Activated T-helper 2 cell treated with anti-CD3 and anti-CD28 coated beads, Interferon-gamma antibody, Interleukin-2, Interleukin-4, amounts not matched to agents 10 μg/mL and 5 μg/mL and 100 μg/mL, durations not matched to agents 14 hours and 24 hours and 36 hours (primary cell): ENCODE measurements at regions of chr5 and their contacts with region 1.

Region 1: DNA sequence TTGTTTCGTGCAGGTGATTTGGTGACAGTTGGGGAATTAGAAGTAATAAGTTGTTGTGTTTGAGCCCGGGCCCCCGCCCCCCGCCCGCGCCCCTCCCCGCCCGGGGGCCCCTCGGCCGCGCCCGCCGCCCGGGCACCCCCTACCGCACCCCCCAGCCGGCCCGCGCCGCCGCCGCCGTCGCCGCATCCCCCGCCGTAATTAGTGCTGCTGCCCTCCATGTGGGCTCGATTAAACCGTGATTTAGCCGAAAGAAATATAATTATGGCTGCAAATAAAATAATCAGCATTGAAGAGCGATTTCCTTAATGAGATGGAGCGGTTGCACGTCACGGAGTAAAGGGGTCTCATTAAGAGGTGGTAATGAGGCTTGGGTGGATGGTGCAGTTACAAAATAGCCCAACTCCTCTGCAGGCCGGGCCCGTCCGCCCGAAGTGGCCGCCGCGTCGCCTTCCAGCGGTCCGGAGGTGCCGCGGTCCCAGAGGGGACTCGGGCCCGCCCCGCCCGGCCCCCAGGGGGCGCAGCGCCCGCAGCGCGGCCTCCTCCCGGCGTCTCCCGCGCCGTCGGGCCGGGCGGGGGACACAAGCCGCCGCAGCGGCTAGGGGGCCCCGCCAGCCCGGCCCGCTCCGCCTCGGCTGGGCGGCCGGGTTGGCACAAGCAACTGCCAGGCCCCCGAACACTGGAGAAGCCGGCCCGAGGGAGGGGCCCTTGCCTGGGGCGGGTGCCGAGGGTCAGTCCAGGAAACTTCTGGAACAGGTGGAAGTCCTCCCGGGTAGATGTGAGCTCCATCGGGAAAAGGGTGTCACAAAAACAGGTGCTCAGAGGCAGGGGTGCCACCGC is 6.9 kb upstream of the OTP start:
- DNase-seq: no peak
- H3K4me3 Mint-ChIP-seq: peak overlapping the region; percentile 53
- H3K27ac Mint-ChIP-seq: no peak overlapping the region
- H3K4me1 Mint-ChIP-seq: peaks cover 14% of the 10 kb centered on the region
- H3K27me3 Mint-ChIP-seq: peaks cover 84% of the 10 kb centered on the region

Region 2: GRCh38 chr5:76082772-76083554 is 1562.4 kb before region 1 on chr5 and contains the start of gene SV2C:
- intact Hi-C with region 1: loop called (anchors 5 kb)
- DNase-seq: peak; percentile 23
- H3K4me3 Mint-ChIP-seq: peak within 1 kb of the TSS; percentile 76
- H3K27ac Mint-ChIP-seq: peak within 1 kb of the TSS; percentile 37
- H3K4me1 Mint-ChIP-seq: peaks cover 17% of the 10 kb centered on the region
- H3K27me3 Mint-ChIP-seq: peaks cover 79% of the 10 kb centered on the region
- total RNA-seq, gene SV2C: 0.05 and 0.32 TPM in 2 replicates

Region 3: DNA sequence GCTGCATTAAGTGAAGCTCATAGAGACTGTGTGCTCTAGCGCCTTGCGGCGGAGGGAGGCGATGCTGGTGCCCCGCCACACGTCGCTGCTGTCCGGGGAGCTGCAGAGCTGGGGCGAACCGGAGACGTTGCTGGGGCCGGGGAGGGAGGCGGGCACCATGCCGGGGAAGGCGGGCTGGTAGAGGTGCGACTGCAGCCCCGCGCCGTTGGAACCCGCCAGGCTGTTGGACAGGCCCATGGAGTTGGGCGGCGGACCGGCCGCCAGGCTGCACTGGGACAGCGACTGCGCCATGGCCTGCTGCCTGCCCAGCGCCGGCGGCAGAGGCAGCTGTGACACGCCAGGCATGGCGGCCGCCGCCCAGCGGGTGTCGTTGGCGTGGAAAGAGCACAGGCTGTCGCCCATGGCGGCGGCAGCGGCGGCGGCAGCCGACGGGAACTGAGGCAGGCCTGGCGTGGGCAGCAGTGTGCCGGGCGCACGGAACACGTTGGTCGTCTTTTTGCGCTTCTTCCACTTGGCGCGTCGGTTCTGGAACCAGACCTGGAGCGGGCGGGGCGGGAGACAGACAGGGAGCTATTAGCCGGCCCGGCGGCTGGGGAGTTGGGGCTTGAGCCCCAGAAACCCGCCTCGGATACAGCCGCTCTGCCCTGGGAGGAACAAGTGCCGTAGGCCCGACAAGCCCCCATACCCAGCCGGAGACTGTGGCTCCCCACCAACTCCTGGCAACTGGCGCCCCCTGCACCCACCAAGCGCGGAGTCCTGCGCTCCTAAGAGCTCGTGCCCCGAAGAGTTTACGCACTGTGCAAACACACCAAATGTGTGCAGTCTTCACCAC is 14.9 kb before region 1 on chr5:
- intact Hi-C with region 1: loop called (anchors 1 kb)
- DNase-seq: peak; percentile 49
- H3K4me3 Mint-ChIP-seq: peak overlapping the region; percentile 75
- H3K27ac Mint-ChIP-seq: no peak overlapping the region
- H3K4me1 Mint-ChIP-seq: peaks cover 12% of the 10 kb centered on the region
- H3K27me3 Mint-ChIP-seq: peaks cover 72% of the 10 kb centered on the region

Region 4: DNA sequence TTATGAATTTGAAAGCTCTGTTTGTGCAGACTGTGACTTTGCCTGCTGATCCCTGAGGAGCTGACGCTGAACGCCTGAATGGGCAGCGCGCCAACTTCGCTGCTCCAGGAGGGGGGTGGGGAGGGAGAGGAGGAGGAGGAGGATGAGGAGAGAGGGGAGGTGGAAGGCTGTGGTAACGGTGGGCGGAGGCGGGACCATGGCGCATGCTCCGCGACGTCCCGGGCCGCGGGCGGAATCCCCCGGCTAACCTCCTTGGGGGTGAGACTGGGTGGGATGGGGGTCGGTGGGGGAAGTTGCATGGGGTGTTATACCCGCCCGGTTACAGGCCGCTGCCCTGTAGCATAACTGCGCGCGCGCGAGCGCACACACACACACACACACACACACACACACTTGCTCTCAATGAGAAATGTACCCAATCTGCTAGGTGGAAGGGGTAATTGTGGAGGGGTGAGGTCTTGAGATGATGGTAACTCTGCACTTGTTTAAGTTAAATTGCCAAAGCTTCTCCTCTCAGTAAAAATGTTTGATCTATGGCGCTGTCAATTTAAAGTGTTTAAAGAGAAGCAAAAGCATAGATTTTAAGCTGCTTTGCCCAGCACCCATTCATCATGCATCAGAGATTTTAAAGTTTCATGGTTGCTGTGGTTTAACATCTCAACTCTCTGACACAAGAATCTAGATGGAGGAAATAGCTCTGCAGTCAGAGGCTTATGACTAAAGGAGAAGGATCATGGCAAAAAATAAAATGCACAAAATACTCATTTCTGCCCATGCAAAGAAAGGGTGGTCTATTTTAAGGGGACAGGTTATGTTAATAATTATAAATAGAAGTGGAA is 207.4 kb after region 1 on chr5:
- intact Hi-C with region 1: loop called (anchors 2 kb)
- DNase-seq: peak; percentile 35
- H3K4me3 Mint-ChIP-seq: peak overlapping the region; percentile 72
- H3K27ac Mint-ChIP-seq: peak overlapping the region; percentile 77
- H3K4me1 Mint-ChIP-seq: peaks cover 14% of the 10 kb centered on the region
- H3K27me3 Mint-ChIP-seq: peaks cover 23% of the 10 kb centered on the region

Region 5: GRCh38 chr5:77972469-77973252 is 327.3 kb after region 1 on chr5:
- intact Hi-C with region 1: loop called (anchors 5 kb)
- DNase-seq: no peak
- H3K4me3 Mint-ChIP-seq: peak overlapping the region; percentile 56
- H3K27ac Mint-ChIP-seq: no peak overlapping the region
- H3K4me1 Mint-ChIP-seq: peaks cover 10% of the 10 kb centered on the region
- H3K27me3 Mint-ChIP-seq: peaks cover 75% of the 10 kb centered on the region

Region 6: GRCh38 chr5:78008356-78008967 is 363.1 kb after region 1 on chr5:
- intact Hi-C with region 1: loop called (anchors 1 kb)
- DNase-seq: no peak
- H3K4me3 Mint-ChIP-seq: no peak overlapping the region
- H3K27ac Mint-ChIP-seq: no peak overlapping the region
- H3K4me1 Mint-ChIP-seq: no peaks in the 10 kb centered on the region
- H3K27me3 Mint-ChIP-seq: no peaks in the 10 kb centered on the region

Region 7: DNA sequence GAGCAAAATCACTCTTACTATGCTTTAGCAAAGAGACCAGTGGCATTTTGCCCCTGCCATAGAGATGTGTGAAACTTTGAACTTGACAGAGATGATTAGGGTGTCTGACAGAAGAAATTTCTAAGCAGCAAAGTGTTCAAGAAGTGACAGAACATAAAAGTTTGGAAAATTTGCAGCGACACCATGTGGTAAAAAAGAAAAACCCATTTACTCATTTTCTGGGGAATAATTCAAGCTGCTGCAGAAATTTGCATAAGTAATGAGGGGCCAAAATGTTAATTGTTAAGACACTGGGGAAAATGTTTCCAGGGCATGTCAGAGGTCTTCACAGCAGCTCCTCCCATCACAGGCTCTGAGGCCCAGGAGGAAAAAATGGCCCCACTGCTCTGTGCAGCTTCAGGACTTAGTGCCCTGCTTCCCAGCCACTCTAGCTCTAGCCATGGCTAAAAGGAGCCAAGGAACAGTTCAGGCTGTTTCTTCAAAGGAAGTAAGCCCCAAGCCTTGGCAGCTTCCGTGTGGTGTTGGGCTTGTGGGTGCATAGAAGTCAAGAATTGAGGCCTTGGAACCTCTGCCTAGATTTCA is 655.2 kb after region 1 on chr5:
- intact Hi-C with region 1: loop called (anchors 2 kb)
- DNase-seq: no peak
- H3K4me3 Mint-ChIP-seq: no peak overlapping the region
- H3K27ac Mint-ChIP-seq: no peak overlapping the region
- H3K4me1 Mint-ChIP-seq: peaks cover 7% of the 10 kb centered on the region
- H3K27me3 Mint-ChIP-seq: peaks cover 31% of the 10 kb centered on the region